ENCODE measurements at regions of chr1 and their contacts with region 1.

Region 1: DNA sequence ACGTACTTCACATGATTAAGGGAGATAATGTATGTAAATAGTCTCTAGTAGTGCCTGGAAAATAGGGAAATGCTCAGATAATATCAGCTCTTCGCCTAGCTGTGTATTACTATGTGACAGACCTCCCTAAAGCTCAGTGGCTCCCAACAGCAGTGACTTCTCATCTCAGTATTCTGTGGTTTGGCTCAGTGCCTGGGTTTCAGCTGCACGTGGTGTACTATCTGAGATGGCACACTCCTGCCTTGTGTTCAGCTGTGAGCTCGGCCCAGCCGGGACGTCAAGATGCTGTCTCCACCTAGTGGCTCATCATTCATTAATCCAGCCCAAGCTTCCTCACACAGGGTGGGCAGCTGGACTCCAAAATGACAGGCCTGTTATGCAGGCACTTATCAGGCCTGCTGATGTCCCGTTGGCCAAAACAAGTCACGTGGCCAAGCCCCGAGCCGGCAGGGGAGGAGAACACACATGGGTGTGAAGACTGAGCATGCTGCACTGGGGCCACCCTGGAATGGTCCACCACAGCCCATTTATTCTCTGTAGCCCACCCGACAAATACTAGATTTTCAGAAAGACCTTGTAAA is 17.8 kb downstream of the SLFNL1 start:
- DNase-seq: peak; percentile 98
- ATAC-seq: peak; percentile 100
- H3K4me3 ChIP-seq: no peak overlapping the region
- H3K27ac ChIP-seq: peak overlapping the region; percentile 10 to 82 (median 72)
- H3K4me1 ChIP-seq: peaks cover 3 to 7% of the 10 kb centered on the region in 2 donors
- H3K27me3 ChIP-seq: no peaks in the 10 kb centered on the region
- CTCF ChIP-seq: peak; percentile 43 to 65 (median 58)
- POLR2A ChIP-seq: no peak

Region 2: GRCh38 chr1:40979233-40980067 is 24.3 kb before region 1 on chr1 and contains the start of gene CTPS1:
- in situ Hi-C with region 1: no loop called
- intact Hi-C with region 1: loop called (anchors 1 kb)
- DNase-seq: peak; percentile 91 to 93
- ATAC-seq: peak; percentile 97 to 98
- H3K4me3 ChIP-seq: peak within 1 kb of the TSS; percentile 65 to 93 (median 76)
- H3K27ac ChIP-seq: peak within 1 kb of the TSS; percentile 86 to 98 (median 95)
- H3K4me1 ChIP-seq: peaks cover 11 to 14% of the 10 kb centered on the region in 2 donors
- H3K27me3 ChIP-seq: no peaks in the 10 kb centered on the region
- CTCF ChIP-seq: no peak
- POLR2A ChIP-seq: peak; percentile 72 to 80
- total RNA-seq, gene CTPS1: 9.5 to 24.3 (median 14.7) TPM

Region 3: DNA sequence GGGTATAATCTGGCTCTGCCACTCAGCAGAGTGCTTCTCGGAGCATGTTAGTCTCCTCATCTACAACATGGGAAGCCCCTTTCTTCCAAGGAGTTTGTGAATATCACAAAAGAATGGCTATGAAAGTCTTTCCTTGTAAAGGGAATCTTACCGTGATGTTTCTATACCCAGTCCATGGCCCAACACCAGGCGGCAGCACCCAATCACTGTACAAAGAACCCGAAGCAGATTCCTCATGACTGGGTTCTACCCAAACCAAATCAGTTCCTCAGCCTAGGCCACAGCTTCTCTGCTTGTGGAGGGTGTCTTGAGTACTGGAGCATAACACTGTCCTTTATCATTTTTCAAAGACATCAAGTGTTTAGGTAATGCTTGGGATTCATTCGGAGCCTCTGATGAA is 34.4 kb after region 1 on chr1:
- in situ Hi-C with region 1: no loop called
- intact Hi-C with region 1: no loop called
- DNase-seq: no peak
- ATAC-seq: no peak
- H3K4me3 ChIP-seq: no peak overlapping the region
- H3K27ac ChIP-seq: no peak overlapping the region
- H3K4me1 ChIP-seq: no peaks in the 10 kb centered on the region
- H3K27me3 ChIP-seq: no peaks in the 10 kb centered on the region
- CTCF ChIP-seq: no peak
- POLR2A ChIP-seq: no peak

Region 4: DNA sequence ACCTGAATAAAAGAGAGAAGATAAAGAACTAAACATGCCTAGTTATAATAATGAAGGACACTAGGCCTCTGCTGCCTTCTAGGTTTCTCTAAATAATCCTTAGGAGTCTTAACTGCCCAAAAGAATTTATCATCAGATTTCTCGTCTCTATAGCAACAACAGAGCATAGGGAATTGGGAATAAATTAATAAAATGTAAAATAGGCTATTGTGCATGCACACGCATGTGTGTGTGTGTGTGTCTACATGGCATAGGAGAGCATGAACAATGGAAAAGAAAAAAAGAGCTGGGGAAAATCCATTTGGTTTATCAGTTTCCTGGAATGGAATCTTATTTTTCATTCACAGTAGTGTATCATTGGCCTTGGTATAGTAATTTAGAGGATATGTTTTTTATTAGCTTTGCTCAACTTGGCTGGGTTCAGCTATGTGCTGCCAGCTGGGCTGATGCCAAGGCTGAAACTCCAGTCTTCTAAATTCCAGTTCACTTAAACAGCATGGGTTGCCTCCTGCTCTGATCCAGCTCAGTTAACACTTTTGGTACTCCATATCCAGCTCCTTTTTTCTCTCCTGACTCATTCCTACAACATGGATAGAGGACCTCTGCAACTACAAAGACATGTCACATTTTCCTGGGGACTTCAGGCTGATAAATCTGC is 98.3 kb after region 1 on chr1:
- in situ Hi-C with region 1: no loop called
- intact Hi-C with region 1: loop called (anchors 5 kb)
- DNase-seq: peak; percentile 71 to 87
- ATAC-seq: peak; percentile 96 to 99
- H3K4me3 ChIP-seq: peak overlapping the region in 1 of 4 donors; percentile 24
- H3K27ac ChIP-seq: peak overlapping the region; percentile 35 to 66 (median 59)
- H3K4me1 ChIP-seq: peaks cover 27 to 31% of the 10 kb centered on the region in 2 donors
- H3K27me3 ChIP-seq: no peaks in the 10 kb centered on the region
- CTCF ChIP-seq: no peak
- POLR2A ChIP-seq: no peak

Region 5: GRCh38 chr1:41175546-41175945 is 171.8 kb after region 1 on chr1:
- in situ Hi-C with region 1: no loop called
- intact Hi-C with region 1: no loop called
- DNase-seq: no peak
- ATAC-seq: no peak
- H3K4me3 ChIP-seq: no peak overlapping the region
- H3K27ac ChIP-seq: no peak overlapping the region
- H3K4me1 ChIP-seq: no peaks in the 10 kb centered on the region
- H3K27me3 ChIP-seq: no peaks in the 10 kb centered on the region
- CTCF ChIP-seq: no peak
- POLR2A ChIP-seq: no peak

Measured in gastrocnemius medialis (tissue), 4 donors.